ENCODE measurements at regions of chr11 and their contacts with region 1.

Region 1: GRCh38 chr11:77075425-77075905 is 8.7 kb downstream of the CAPN5 start:
- DNase-seq: no peak
- ATAC-seq: no peak

Region 2: GRCh38 chr11:76152086-76152681 is 923.3 kb before region 1 on chr11:
- intact Hi-C with region 1: loop called (anchors 5 kb)
- DNase-seq: peak; percentile 95
- ATAC-seq: peak; percentile 95

Region 3: GRCh38 chr11:76935042-76935441 is 140.4 kb before region 1 on chr11:
- intact Hi-C with region 1: no loop called
- DNase-seq: no peak
- ATAC-seq: no peak

Measured in sciatic nerve (tissue), 2 donors.